PC-3 (cell line): ENCODE measurements at regions of chr16 and their contacts with region 1.

Region 1: DNA sequence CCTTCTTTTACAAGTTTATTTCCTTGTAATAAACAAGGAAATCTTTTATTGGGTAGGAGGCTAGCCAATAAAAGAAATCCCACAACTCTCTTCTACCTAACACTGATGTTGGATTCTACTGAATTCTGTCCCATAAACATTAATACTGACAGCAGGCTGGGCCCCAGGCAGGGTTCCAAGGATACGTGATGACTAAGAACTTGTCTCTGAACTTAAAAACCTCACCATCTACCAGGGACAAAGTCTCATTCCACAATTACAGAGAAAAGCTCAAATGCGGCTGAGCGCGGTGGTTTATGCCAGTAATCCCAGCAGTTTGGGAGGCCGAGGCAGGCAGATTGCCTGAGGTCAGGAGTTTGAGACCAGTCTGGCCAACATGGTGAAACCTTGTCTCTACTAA is 64.9 kb downstream of the ARHGAP17 start:
- DNase-seq: peak; percentile 15
- ATAC-seq: 0 out of 2 replicates have a peak, but pooled peaks have one; percentile 15
- H3K4me3 ChIP-seq: no peak overlapping the region
- H3K27ac ChIP-seq: no peak overlapping the region
- H3K4me1 ChIP-seq: no peaks in the 10 kb centered on the region
- H3K27me3 ChIP-seq: no peaks in the 10 kb centered on the region
- CTCF ChIP-seq: no peak

Region 2: GRCh38 chr16:24975428-24975889 is 25.2 kb after region 1 on chr16:
- CTCF ChIA-PET with region 1: no interaction called
- POLR2A ChIA-PET with region 1: interaction called, 12 read pairs
- intact Hi-C with region 1: no loop called
- DNase-seq: no peak
- ATAC-seq: no peak
- H3K4me3 ChIP-seq: no peak overlapping the region
- H3K27ac ChIP-seq: no peak overlapping the region
- H3K4me1 ChIP-seq: peaks cover 17% of the 10 kb centered on the region
- H3K27me3 ChIP-seq: no peaks in the 10 kb centered on the region
- CTCF ChIP-seq: no peak